ENCODE measurements at regions of chr1 and their contacts with region 1.

Region 1: GRCh38 chr1:109493805-109494539 is at the start of gene CYB561D1:
- DNase-seq: peak; percentile 87
- H3K4me3 Mint-ChIP-seq: peak within 1 kb of the TSS; percentile 96
- H3K27ac Mint-ChIP-seq: peak within 1 kb of the TSS; percentile 71
- H3K4me1 Mint-ChIP-seq: peaks cover 34% of the 10 kb centered on the region
- H3K27me3 Mint-ChIP-seq: no peaks in the 10 kb centered on the region
- total RNA-seq, gene CYB561D1: 12.6 and 13.4 TPM in 2 replicates

Region 2: GRCh38 chr1:109181105-109181806 is 312.7 kb before region 1 on chr1:
- intact Hi-C with region 1: no loop called
- DNase-seq: no peak
- H3K4me3 Mint-ChIP-seq: no peak overlapping the region
- H3K27ac Mint-ChIP-seq: no peak overlapping the region
- H3K4me1 Mint-ChIP-seq: no peaks in the 10 kb centered on the region
- H3K27me3 Mint-ChIP-seq: no peaks in the 10 kb centered on the region

Region 3: GRCh38 chr1:109208836-109209463 is 285.0 kb before region 1 on chr1:
- intact Hi-C with region 1: no loop called
- DNase-seq: no peak
- H3K4me3 Mint-ChIP-seq: no peak overlapping the region
- H3K27ac Mint-ChIP-seq: no peak overlapping the region
- H3K4me1 Mint-ChIP-seq: peaks cover 6% of the 10 kb centered on the region
- H3K27me3 Mint-ChIP-seq: peaks cover 1% of the 10 kb centered on the region

Region 4: GRCh38 chr1:109454497-109455133 is 39.4 kb before region 1 on chr1:
- intact Hi-C with region 1: loop called (anchors 1 kb)
- DNase-seq: no peak
- H3K4me3 Mint-ChIP-seq: no peak overlapping the region
- H3K27ac Mint-ChIP-seq: no peak overlapping the region
- H3K4me1 Mint-ChIP-seq: no peaks in the 10 kb centered on the region
- H3K27me3 Mint-ChIP-seq: peaks cover 30% of the 10 kb centered on the region

Region 5: DNA sequence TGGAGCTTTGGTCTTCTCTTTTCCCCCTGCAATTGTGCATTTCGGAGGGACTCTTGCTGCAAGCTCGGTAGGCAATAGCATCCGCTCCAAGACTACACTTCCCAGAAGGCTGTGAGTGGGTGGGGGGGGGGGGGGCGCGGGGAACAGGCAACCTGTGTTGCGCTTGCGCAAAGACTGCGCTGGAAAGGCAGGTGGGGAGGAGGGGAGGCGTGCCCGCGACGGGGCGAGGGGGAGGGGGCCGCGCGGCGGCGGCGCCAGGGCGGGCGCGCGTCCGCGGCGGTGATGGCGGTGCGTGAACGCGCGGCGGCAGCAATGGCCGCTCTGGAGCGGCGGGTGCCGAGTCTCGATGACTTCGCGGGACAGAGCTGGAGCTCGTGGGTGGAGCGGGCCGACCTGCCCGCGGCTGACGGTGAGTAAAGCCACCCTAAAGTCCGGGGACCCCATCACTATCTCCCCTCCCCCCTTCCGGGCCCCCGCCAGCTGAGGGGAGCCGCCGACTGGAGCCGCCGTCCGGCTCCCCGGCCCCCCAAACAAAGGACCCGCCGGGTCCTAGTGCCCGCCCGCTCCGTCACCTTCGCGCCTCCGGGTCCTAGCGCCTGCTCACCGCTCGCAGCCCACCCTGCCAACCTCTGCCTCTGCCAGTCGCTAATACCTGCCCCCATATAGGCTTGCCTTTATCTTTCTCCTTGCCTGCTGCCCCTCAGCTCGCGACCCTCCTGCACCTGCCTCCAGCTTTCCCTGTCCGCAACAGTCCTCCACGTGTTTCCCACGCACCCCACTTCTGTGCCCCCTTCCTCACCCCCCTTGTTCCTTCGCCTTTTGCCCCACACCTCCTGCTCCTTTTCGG is 10.1 kb before region 1 on chr1 and contains the start of gene ATXN7L2:
- intact Hi-C with region 1: loop called (anchors 1 kb)
- DNase-seq: peak; percentile 87
- H3K4me3 Mint-ChIP-seq: peak within 1 kb of the TSS; percentile 95
- H3K27ac Mint-ChIP-seq: peak within 1 kb of the TSS; percentile 96
- H3K4me1 Mint-ChIP-seq: peaks cover 35% of the 10 kb centered on the region
- H3K27me3 Mint-ChIP-seq: peaks cover 13% of the 10 kb centered on the region
- total RNA-seq, gene ATXN7L2: 17.4 and 18.0 TPM in 2 replicates

Region 6: DNA sequence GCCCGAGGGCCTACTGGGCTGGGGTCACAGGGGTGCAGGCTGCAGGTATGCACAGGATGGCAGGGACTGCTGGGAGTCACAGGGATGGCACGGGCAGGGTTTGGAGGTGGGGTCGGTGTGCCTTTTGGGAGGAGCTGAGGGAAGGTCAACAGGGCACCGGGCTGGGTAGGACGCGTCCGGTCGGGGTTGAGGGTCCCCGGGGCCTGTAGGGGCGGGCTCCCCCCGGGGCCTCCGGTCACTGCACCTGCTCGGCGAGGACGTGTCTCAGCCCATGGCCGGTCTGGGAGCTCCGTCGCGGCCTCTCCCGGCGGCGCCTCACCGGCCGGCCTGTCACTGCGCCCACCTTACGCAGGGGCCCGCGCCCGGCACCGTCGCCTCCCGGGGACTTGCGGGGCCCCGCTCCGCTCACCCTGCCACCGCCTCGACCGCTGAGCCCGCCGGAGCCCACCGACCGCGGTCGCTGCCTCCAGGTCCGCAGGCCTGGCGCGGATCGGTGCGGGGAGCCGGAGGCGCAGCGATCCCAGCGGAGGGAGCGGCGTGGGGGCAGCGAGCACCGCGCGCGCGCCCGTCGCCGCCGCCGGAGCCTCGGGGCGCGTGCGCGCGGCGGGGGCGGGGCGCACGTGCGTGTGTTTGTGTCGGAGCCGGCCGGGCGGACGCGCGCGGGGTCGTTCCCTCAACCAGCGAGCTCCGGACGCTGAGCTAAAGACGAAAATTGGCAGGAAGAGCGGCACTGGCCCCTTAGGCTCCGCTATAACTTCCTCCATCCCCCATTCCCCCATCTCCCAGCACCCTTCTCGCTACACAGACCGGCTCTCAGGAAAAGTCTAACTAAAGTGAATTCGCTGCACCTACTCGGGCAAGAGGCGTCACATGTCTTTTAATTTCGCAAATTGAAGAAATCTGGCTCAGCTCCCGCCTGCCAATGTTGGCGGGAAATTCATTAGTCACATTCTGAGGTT is 15.5 kb after region 1 on chr1 and contains the start of gene AMIGO1:
- intact Hi-C with region 1: loop called (anchors 1 kb)
- DNase-seq: peak; percentile 25
- H3K4me3 Mint-ChIP-seq: peak within 1 kb of the TSS; percentile 87
- H3K27ac Mint-ChIP-seq: peak within 1 kb of the TSS; percentile 49
- H3K4me1 Mint-ChIP-seq: peaks cover 23% of the 10 kb centered on the region
- H3K27me3 Mint-ChIP-seq: peaks cover 51% of the 10 kb centered on the region
- total RNA-seq, gene AMIGO1: 1.2 TPM in 2 replicates

Region 7: GRCh38 chr1:109598655-109599054 is 104.7 kb after region 1 on chr1:
- intact Hi-C with region 1: no loop called
- DNase-seq: no peak
- H3K4me3 Mint-ChIP-seq: no peak overlapping the region
- H3K27ac Mint-ChIP-seq: no peak overlapping the region
- H3K4me1 Mint-ChIP-seq: no peaks in the 10 kb centered on the region
- H3K27me3 Mint-ChIP-seq: no peaks in the 10 kb centered on the region

Measured in activated T-helper 1 cell treated with anti-CD3 and anti-CD28 coated beads, Interleukin-12 subunit alpha, Interleukin-12 subunit beta, Interleukin-2, Interleukin-4 antibody, amounts not matched to agents 30 ng/mL and 10 ng/mL and 1 ng/mL, durations not matched to agents 14 hours and 24 hours and 36 hours (primary cell).